CD8-positive, alpha-beta memory T cell (primary cell): ENCODE measurements at regions of chr16 and their contacts with region 1.

Region 1: DNA sequence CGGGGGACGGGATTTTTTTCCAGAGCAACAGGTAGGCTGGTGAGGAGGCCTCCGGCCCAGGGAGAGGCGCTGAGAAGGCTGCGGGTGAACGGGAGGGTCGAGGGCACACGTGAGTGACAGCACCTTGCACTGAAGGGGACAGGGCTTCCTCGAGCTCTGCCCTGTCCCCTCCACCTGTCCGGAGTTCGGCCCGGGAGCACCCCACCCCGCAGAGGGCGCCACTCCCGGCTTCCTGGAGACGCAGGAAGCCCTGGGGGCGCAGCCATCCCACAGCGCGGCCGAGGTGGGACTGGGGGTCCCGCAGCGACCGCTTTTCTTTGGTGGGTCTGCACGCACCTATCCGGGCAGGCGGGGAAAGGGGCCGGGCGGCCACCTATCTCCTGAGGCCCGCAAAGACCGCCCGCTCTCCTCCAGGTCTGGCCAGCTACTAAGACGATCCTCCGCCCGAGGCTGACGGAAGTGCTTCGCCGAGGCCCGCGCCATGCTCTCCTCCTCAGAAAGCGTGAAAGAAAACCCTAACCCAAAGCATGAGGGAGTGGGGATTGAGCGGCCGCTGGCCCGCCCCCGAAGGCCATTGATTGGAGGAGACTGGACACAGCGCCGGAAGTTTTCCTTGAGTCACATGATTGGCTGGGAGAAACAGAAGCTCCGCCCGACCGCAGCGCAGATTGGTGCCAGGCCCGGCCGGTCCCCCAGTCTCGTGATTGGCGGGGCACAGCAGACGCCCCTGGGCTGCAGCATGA is 34.3 kb downstream of the DDX19A start:
- DNase-seq: peak; percentile 94 to 97 (median 95)
- H3K4me3 ChIP-seq: peak overlapping the region; percentile 66
- H3K4me3 Mint-ChIP-seq: peak overlapping the region; percentile 92 to 99 (median 96)
- H3K27ac ChIP-seq: peak overlapping the region; percentile 25
- H3K27ac Mint-ChIP-seq: peak overlapping the region; percentile 85 to 98 (median 92)
- H3K4me1 ChIP-seq: peaks cover 16% of the 10 kb centered on the region
- H3K4me1 Mint-ChIP-seq: peaks cover 18 to 24% (median 19%) of the 10 kb centered on the region in 3 donors
- H3K27me3 ChIP-seq: no peaks in the 10 kb centered on the region
- H3K27me3 Mint-ChIP-seq: no peaks in the 10 kb centered on the region

Region 2: DNA sequence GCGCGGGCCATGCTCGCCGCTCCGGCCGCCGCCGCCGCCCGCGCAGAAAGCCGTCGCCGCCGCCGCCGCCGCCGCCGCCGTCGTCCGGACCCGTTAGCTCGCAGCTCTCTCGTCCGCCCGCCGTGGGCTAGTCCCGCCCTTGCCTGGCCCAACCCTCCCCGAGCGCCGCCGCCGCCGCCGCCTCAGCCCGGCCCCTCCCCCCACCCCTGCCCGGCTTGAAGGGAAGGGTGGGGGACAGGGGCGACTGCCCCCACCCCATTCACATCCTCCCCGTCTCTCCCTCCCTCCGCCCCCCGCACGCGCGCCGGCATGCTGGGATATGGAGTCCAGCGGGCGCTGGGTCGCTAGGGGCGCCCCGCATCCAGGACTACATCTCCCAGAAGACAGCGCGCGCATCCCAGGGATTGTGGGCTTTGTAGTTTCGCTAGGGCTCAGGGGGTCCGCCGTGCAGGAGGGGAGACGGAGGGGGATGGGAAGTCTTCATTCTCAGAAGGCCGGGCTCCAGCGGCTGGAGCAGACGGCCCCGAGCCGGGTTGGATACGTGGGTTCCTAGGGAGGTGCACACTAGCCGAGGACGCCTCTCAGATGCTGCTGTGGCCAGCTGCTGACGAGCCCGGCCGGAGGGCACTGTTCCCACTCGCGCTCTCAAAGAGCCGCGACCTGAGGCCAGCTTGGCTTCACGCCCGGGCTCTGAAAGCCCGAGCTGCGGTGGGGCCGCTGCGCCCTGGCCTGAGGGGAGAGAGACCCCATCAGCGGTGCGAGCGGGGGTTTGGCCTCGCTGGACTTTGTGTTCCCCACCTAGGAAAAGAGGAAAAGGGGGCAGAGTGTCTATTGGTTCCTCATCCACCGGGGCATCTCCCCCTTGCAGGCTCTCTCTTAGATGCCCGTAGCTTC is 58.2 kb after region 1 on chr16 and contains the start of gene ST3GAL2:
- CTCF ChIA-PET with region 1: interaction called, 4 read pairs
- POLR2A ChIA-PET with region 1: interaction called, 19 read pairs
- DNase-seq: peak; percentile 88 to 96 (median 89)
- H3K4me3 ChIP-seq: peak within 1 kb of the TSS; percentile 95
- H3K4me3 Mint-ChIP-seq: peak within 1 kb of the TSS; percentile 91 to 97 (median 94)
- H3K27ac ChIP-seq: peak within 1 kb of the TSS; percentile 67
- H3K27ac Mint-ChIP-seq: peak within 1 kb of the TSS; percentile 72 to 97 (median 92)
- H3K4me1 ChIP-seq: peaks cover 33% of the 10 kb centered on the region
- H3K4me1 Mint-ChIP-seq: peaks cover 26 to 46% (median 35%) of the 10 kb centered on the region in 3 donors
- H3K27me3 ChIP-seq: no peaks in the 10 kb centered on the region
- H3K27me3 Mint-ChIP-seq: no peaks in the 10 kb centered on the region
- total RNA-seq, gene ST3GAL2: 24.2 to 24.8 TPM

Region 3: GRCh38 chr16:70523076-70523742 is 142.2 kb after region 1 on chr16 and contains the start of gene COG4:
- CTCF ChIA-PET with region 1: no interaction called
- POLR2A ChIA-PET with region 1: interaction called, 27 read pairs
- DNase-seq: peak; percentile 87 to 94 (median 89)
- H3K4me3 ChIP-seq: peak within 1 kb of the TSS; percentile 100
- H3K4me3 Mint-ChIP-seq: peak within 1 kb of the TSS; percentile 93 to 100 (median 98)
- H3K27ac ChIP-seq: peak within 1 kb of the TSS; percentile 99
- H3K27ac Mint-ChIP-seq: peak within 1 kb of the TSS; percentile 94 to 99 (median 98)
- H3K4me1 ChIP-seq: peaks cover 50% of the 10 kb centered on the region
- H3K4me1 Mint-ChIP-seq: peaks cover 53 to 65% (median 63%) of the 10 kb centered on the region in 3 donors
- H3K27me3 ChIP-seq: no peaks in the 10 kb centered on the region
- H3K27me3 Mint-ChIP-seq: no peaks in the 10 kb centered on the region
- total RNA-seq, gene COG4: 50.7 to 51.9 TPM

Region 4: DNA sequence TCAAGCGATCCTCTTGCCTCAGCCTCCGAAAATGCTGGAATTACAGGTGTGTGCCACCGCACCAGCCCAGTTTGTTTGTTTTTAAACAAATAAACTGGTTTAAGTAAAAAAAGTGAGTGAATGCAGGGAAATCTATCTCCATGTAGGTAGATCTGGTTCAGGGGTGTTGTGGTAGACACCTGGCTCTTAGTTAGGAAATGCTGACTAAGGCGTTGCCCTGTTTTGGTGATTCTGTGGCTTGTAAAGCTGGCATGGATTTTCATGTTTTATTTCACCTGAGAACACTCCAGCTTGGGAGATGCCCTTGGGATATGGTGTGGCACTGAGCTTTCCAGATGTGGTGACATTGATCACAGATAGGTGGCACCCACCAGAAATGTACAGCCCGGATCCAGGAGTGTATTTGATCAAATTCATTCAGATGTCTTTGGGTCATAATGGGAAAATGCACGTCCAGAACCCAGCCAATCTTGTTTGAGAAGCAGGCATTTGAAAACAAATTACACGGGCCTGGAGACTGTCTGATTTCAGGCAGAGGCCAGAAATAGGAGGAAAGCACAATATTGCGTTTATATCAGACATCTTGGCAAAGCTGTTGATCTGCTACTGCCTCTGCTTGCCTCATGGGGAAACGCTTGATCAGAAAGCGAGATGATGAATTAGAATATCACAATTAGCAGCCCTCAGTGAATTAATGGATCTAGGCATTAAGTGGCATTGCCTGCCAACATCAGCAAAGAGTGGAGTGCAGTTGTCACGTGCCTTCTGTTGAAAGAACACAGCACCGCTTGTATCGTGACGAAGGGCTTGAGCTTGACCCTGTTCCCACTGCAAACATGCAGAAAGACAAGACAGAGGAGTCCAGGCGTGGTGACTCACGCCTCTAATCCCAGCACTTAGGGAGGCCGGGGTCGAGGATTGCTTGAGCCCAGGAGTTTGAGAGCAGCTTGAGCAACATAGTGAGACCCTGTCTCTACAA is 258.1 kb after region 1 on chr16:
- CTCF ChIA-PET with region 1: no interaction called
- POLR2A ChIA-PET with region 1: no interaction called
- DNase-seq: no peak
- H3K4me3 ChIP-seq: no peak overlapping the region
- H3K4me3 Mint-ChIP-seq: no peak overlapping the region
- H3K27ac ChIP-seq: no peak overlapping the region
- H3K27ac Mint-ChIP-seq: no peak overlapping the region
- H3K4me1 ChIP-seq: no peaks in the 10 kb centered on the region
- H3K4me1 Mint-ChIP-seq: no peaks in the 10 kb centered on the region
- H3K27me3 ChIP-seq: no peaks in the 10 kb centered on the region
- H3K27me3 Mint-ChIP-seq: peaks cover 10 to 11% of the 10 kb centered on the region in 2 donors